ENCODE measurements at regions of chr11 and their contacts with region 1.

Region 1: DNA sequence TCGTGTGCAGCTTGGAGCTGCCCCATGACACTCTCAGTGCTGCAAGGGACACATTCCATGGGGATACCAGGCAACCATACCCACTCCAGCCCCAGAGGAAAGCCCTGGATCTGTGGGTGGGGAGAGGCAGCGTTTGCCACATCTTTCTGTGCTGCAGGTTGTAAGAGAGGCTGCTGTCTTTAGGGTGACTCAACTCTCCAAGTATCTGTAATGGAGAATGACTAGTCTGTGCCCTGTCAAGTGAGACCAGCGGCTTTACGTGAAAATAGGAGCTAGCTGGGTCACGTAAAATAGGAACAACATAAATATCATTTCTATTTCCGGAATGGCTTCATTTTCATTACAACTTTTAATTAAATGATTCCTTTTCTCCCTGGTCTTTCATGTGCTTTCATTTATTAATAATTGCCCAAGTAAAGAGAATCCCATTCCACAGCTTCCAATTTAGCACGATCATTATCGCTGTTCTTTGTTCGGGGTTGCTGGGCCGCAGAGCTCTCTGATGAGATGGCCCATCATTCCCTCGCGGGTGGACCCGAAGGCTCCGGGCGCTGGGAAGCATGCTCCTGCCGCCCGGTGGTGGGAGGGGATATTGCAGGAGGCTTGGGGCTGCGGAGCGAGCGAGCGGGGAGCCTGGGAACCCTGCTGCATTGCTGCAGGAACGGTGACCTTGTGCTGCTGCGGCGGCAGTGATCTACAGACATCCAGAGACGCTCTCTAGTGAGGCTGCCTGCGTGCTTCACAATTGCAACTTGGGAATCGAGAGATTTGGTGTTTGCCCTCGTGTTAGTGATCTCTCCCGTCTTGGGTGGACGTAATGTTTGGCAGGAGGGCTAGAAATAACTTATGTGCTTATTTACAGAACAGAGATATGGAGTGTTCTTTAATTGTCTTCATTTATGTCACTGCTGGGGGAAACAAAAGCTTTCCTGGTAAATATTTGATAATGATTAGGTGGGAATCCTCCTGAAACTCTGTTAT is 10.6 kb downstream of the SLC6A5 start:
- DNase-seq: peak; percentile 94
- ATAC-seq: peak; percentile 95
- H3K4me3 Mint-ChIP-seq: peak overlapping the region; percentile 20
- H3K27ac Mint-ChIP-seq: no peak overlapping the region
- H3K4me1 Mint-ChIP-seq: peaks cover 31% of the 10 kb centered on the region
- H3K27me3 Mint-ChIP-seq: peaks cover 68% of the 10 kb centered on the region
- CTCF ChIP-seq: peak; percentile 95

Region 2: GRCh38 chr11:19580646-19581045 is 1029.4 kb before region 1 on chr11:
- CTCF ChIA-PET with region 1: no interaction called
- POLR2A ChIA-PET with region 1: no interaction called
- DNase-seq: no peak
- ATAC-seq: no peak
- H3K4me3 Mint-ChIP-seq: no peak overlapping the region
- H3K27ac Mint-ChIP-seq: no peak overlapping the region
- H3K4me1 Mint-ChIP-seq: peaks cover 10% of the 10 kb centered on the region
- H3K27me3 Mint-ChIP-seq: peaks cover 11% of the 10 kb centered on the region
- CTCF ChIP-seq: no peak

Region 3: GRCh38 chr11:20355221-20356219 is 254.5 kb before region 1 on chr11:
- CTCF ChIA-PET with region 1: interaction called, 12 read pairs
- POLR2A ChIA-PET with region 1: no interaction called
- DNase-seq: peak; percentile 46
- ATAC-seq: peak; percentile 87
- H3K4me3 Mint-ChIP-seq: no peak overlapping the region
- H3K27ac Mint-ChIP-seq: no peak overlapping the region
- H3K4me1 Mint-ChIP-seq: 0 out of 2 replicates have a peak, but pooled peaks cover 4% of the 10 kb centered on the region
- H3K27me3 Mint-ChIP-seq: peaks cover 29% of the 10 kb centered on the region
- CTCF ChIP-seq: peak; percentile 40; the same call in 1 of the 2 replicates

Region 4: DNA sequence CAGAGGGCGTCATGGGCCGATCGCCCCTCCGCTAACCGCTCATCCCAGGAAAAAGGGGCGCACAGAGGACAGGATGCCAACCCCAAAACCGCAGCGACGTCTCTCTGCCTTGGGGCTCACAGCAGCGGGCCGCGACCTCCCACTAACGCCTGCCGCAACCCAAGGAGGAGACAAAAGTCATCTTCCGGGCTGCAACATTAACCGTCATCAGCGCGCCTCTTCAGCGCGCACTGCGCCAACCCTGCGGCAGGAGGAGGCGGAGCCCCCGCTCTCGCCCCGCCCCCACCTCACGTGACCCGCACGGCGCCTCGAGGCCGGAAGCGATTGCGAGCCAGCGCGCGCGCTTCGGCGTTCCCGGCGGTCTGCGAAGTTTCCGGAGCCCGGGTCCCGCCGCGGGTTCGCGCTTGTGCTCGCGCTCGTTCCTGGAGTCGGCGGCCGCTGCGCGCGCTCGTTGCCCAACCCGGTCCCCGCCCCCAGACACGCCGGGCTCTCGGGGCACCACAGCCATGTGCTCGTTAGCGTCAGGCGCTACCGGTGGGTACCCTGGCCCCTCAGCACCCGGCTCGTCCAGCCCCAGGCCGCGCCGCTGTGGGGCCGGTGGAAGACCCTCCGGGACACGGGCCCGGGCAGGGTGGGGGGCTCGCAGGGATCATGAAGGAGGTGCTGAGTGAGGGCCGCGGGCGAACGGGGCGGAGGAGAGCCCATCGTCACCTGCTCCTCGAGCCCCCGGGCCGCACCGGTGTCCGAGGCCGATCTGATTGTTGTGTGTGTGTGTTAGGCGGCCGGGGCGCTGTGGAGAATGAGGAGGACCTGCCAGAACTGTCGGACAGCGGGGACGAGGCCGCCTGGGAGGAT is 222.5 kb before region 1 on chr11 and contains the start of gene PRMT3:
- CTCF ChIA-PET with region 1: interaction called, 11 read pairs
- POLR2A ChIA-PET with region 1: no interaction called
- DNase-seq: peak; percentile 97
- ATAC-seq: peak; percentile 83
- H3K4me3 Mint-ChIP-seq: peak within 1 kb of the TSS; percentile 97
- H3K27ac Mint-ChIP-seq: peak within 1 kb of the TSS; percentile 99
- H3K4me1 Mint-ChIP-seq: peaks cover 10% of the 10 kb centered on the region
- H3K27me3 Mint-ChIP-seq: no peaks in the 10 kb centered on the region
- CTCF ChIP-seq: peak; percentile 92
- total RNA-seq, gene PRMT3: 26.7 to 31.4 TPM (median 28.0 TPM) in 3 replicates

Region 5: GRCh38 chr11:20397281-20397680 is 212.7 kb before region 1 on chr11:
- CTCF ChIA-PET with region 1: interaction called, 39 read pairs
- POLR2A ChIA-PET with region 1: no interaction called
- DNase-seq: no peak
- ATAC-seq: peak; percentile 74
- H3K4me3 Mint-ChIP-seq: no peak overlapping the region
- H3K27ac Mint-ChIP-seq: no peak overlapping the region
- H3K4me1 Mint-ChIP-seq: no peaks in the 10 kb centered on the region
- H3K27me3 Mint-ChIP-seq: no peaks in the 10 kb centered on the region
- CTCF ChIP-seq: no peak

Region 6: GRCh38 chr11:20443596-20443995 is 166.4 kb before region 1 on chr11:
- CTCF ChIA-PET with region 1: interaction called, 11 read pairs
- POLR2A ChIA-PET with region 1: no interaction called
- DNase-seq: no peak
- ATAC-seq: peak; percentile 26; the same call in 1 of the 2 replicates
- H3K4me3 Mint-ChIP-seq: no peak overlapping the region
- H3K27ac Mint-ChIP-seq: no peak overlapping the region
- H3K4me1 Mint-ChIP-seq: peaks cover 18% of the 10 kb centered on the region
- H3K27me3 Mint-ChIP-seq: no peaks in the 10 kb centered on the region
- CTCF ChIP-seq: no peak

Region 7: GRCh38 chr11:20497124-20497792 is 112.8 kb before region 1 on chr11:
- CTCF ChIA-PET with region 1: interaction called, 15 read pairs
- POLR2A ChIA-PET with region 1: no interaction called
- DNase-seq: no peak
- ATAC-seq: peak; percentile 52
- H3K4me3 Mint-ChIP-seq: peak overlapping the region; percentile 33; the same call in 1 of the 2 replicates
- H3K27ac Mint-ChIP-seq: peak overlapping the region; percentile 74
- H3K4me1 Mint-ChIP-seq: peaks cover 24% of the 10 kb centered on the region
- H3K27me3 Mint-ChIP-seq: no peaks in the 10 kb centered on the region
- CTCF ChIP-seq: no peak

Region 8: GRCh38 chr11:20599221-20600019 is 10.6 kb before region 1 on chr11 and contains the start of gene SLC6A5:
- CTCF ChIA-PET with region 1: interaction called, 42 read pairs
- POLR2A ChIA-PET with region 1: no interaction called
- DNase-seq: peak; percentile 93
- ATAC-seq: peak; percentile 64
- H3K4me3 Mint-ChIP-seq: peak within 1 kb of the TSS; percentile 54
- H3K27ac Mint-ChIP-seq: no peak within 1 kb of the TSS
- H3K4me1 Mint-ChIP-seq: peaks cover 43% of the 10 kb centered on the region
- H3K27me3 Mint-ChIP-seq: peaks cover 100% of the 10 kb centered on the region
- CTCF ChIP-seq: no peak
- total RNA-seq, gene SLC6A5: 0.05 TPM in 2 of 3 replicates, not detected in the other

Measured in WTC11 (cell line).